PC-9 (cell line): ENCODE measurements at regions of chr7 and their contacts with region 1.

Region 1: GRCh38 chr7:22559829-22560489 is 60.0 kb upstream of the STEAP1B start:
- DNase-seq: peak; percentile 78 to 79
- H3K4me3 ChIP-seq: no peak overlapping the region
- H3K27ac ChIP-seq: peak overlapping the region; percentile 84
- H3K4me1 ChIP-seq: peaks cover 50% of the 10 kb centered on the region
- H3K27me3 ChIP-seq: no peaks in the 10 kb centered on the region
- CTCF ChIP-seq: peak; percentile 99

Region 2: DNA sequence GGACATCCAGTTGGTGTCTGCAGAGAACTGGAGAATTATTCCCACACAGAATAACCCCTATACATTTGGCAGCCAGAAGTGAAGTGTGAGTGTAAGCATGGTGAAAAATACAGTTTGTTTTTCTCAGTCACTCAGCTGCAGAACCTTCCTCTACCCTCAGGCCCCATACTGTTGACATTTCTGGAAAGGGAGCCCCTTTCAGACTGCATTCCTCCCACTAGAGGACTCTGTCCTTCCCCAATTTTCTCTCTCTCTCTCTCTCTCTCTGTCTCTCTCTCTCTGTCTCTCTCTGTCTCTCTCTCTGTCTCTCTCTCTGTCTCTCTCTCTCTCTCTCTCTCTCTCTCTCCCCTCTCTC is 26.8 kb after region 1 on chr7:
- CTCF ChIA-PET with region 1: interaction called, 18 read pairs
- POLR2A ChIA-PET with region 1: interaction called, 6 read pairs
- intact Hi-C with region 1: loop called (anchors 1 kb)
- DNase-seq: peak in 1 of 2 experiments; percentile 67
- H3K4me3 ChIP-seq: no peak overlapping the region
- H3K27ac ChIP-seq: no peak overlapping the region
- H3K4me1 ChIP-seq: peaks cover 46% of the 10 kb centered on the region
- H3K27me3 ChIP-seq: no peaks in the 10 kb centered on the region
- CTCF ChIP-seq: peak; percentile 83

Region 3: GRCh38 chr7:22726345-22727185 is 166.6 kb after region 1 on chr7:
- CTCF ChIA-PET with region 1: interaction called, 113 read pairs
- POLR2A ChIA-PET with region 1: interaction called, 24 read pairs
- intact Hi-C with region 1: loop called (anchors 1 kb)
- DNase-seq: peak; percentile 81 to 86
- H3K4me3 ChIP-seq: peak overlapping the region; percentile 45; the same call in 1 of the 2 replicates
- H3K27ac ChIP-seq: peak overlapping the region; percentile 73
- H3K4me1 ChIP-seq: peaks cover 48% of the 10 kb centered on the region
- H3K27me3 ChIP-seq: no peaks in the 10 kb centered on the region
- CTCF ChIP-seq: peak; percentile 85

Region 4: GRCh38 chr7:22776964-22777363 is 217.0 kb after region 1 on chr7:
- CTCF ChIA-PET with region 1: interaction called, 16 read pairs
- POLR2A ChIA-PET with region 1: no interaction called
- intact Hi-C with region 1: loop called (anchors 1 kb)
- DNase-seq: no peak
- H3K4me3 ChIP-seq: no peak overlapping the region
- H3K27ac ChIP-seq: no peak overlapping the region
- H3K4me1 ChIP-seq: no peaks in the 10 kb centered on the region
- H3K27me3 ChIP-seq: no peaks in the 10 kb centered on the region
- CTCF ChIP-seq: no peak

Region 5: DNA sequence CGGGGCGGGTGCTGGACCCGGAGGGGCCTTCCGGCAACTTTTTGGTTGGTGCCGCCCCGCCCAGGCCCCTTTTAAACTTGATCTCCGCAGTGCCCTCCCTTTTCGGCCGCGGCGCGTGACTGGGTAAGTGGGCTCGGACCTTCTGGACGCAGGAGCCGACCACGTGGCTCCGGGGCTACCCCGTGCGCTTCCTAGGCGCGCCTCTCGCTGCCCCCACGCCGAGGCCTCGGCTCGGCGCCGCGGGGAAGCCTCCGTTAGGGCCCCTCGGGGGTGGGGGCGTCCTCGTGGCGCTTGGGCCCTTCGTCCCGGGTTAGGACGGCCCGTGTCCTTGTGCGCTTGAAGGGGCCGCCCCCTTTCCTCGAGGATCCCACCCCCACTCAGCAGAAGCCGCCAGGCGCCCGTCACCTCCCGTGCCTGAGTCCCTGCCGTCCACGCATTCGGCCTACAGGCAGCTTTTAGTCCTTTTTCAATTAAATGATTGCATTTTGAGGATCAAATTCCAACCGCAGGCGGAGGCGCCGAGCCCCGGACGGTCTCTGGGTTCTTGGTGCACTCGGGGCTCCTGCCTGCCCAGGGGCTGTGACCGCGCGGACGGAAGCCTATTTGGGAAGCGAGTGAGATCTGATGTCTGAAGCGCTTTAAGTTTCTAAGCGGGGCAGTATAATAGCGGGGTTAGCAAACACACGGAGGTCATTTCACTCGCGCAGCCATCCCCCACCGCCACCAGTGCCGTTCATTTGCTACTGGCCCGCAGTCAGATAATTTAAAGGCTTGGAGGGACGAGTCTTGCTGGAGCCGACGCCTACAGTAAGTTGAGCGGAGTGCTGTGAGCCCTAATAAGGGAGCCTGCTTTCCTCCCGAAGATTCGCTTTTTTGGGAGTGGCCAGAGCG is 294.4 kb after region 1 on chr7:
- CTCF ChIA-PET with region 1: no interaction called
- POLR2A ChIA-PET with region 1: interaction called, 3 read pairs
- intact Hi-C with region 1: loop called (anchors 2 kb)
- DNase-seq: peak; percentile 66 to 88
- H3K4me3 ChIP-seq: peak overlapping the region; percentile 81
- H3K27ac ChIP-seq: peak overlapping the region; percentile 52
- H3K4me1 ChIP-seq: peaks cover 49% of the 10 kb centered on the region
- H3K27me3 ChIP-seq: no peaks in the 10 kb centered on the region
- CTCF ChIP-seq: peak; percentile 76; the same call in 1 of the 2 replicates

Region 6: DNA sequence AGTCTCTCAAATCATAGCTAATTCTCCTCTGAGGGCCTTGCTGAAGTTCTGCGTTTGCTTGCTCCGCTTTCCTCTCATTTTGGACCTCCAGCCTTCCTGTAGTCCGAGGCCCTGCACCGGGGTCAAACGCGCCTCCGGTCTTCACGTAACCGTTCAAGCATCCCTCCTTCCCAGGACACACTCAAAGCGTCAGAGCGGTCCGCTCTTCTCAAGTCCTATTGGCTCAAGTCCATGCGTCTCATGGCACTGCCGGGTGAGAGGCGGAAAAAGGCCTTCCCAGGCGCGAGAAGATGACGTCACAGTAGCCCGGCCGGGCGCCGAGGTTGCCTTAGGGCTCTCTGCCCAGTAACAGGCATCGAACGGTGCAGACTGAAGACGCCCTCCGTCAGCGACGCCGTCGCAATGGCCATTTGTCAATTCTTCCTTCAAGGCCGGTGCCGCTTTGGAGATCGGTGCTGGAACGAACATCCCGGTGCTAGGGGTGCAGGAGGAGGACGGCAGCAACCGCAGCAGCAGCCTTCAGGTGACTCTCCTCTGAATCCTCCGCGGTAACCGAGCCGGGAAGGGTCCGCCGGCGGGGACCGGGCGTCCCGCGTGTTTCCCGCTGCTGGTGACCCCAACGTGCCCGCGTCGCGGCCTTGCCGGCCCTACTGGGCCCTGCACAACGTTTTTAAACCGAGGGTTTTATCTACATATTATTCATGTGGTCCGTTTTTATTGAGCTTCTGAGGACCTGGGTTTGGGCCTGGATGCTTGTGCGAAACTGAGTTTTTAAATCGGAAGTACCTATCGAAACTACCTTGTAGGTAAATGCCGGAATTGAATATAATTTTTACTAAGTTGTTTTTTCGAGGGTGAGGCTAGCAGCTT is 622.0 kb after region 1 on chr7 and contains the start of gene NUP42:
- CTCF ChIA-PET with region 1: no interaction called
- POLR2A ChIA-PET with region 1: no interaction called
- intact Hi-C with region 1: loop called (anchors 5 kb)
- DNase-seq: peak; percentile 99 to 100
- H3K4me3 ChIP-seq: peak within 1 kb of the TSS; percentile 98
- H3K27ac ChIP-seq: peak within 1 kb of the TSS; percentile 87
- H3K4me1 ChIP-seq: peaks cover 27% of the 10 kb centered on the region
- H3K27me3 ChIP-seq: no peaks in the 10 kb centered on the region
- CTCF ChIP-seq: no peak
- total RNA-seq, gene NUP42: 41.3 and 51.3 TPM in 2 replicates